ENCODE measurements at regions of chr3 and their contacts with region 1.

Region 1: DNA sequence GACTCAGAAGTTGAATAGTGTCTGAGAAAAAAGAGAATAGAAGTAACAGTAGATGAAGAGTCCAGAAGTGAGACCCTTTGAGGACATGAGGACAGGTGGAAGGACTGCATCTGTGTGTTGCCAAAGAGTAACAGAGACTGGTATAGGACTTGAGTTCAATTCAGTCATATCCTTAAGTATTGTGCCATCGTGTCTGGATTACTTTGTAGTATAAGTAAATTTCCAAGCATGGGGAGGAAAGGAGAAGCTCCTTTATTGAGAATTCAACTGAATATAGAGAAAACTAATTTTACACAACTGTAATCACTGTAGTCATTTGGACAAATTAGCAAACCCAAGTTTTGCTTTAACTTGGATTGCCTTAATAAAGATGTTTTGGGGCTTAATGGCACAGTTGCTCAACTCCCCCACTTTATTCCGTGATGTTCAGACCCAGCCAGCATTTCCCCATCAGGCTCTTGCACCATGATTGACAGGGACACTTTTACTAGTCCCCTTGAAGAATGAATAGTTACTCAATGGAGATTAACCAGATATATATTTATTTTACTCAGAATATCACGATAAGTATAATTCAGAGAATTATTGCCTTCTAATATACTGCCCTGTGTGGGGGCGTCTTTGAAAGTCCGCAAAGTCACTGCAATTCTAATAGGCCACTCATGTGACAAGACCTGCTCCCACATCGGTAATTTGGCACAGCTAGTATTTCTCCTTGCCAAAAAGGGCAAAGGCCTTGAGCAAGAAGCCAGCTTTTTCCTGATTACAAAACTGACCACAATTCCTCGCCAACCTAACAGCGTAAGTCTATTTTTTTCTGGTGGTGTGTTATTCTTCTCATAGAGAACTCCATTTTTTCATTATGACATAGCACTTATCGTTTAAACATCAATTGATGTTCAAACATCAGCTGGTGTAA is 61.3 kb downstream of the PPARG start:
- DNase-seq: peak in 1 of 2 experiments; percentile 60
- H3K4me3 ChIP-seq: no peak overlapping the region
- H3K27ac ChIP-seq: peak overlapping the region; percentile 3
- H3K4me1 ChIP-seq: peaks cover 59% of the 10 kb centered on the region
- H3K27me3 ChIP-seq: no peaks in the 10 kb centered on the region
- CTCF ChIP-seq: no peak

Region 2: GRCh38 chr3:12294885-12295580 is 55.1 kb before region 1 on chr3:
- CTCF ChIA-PET with region 1: no interaction called
- POLR2A ChIA-PET with region 1: no interaction called
- intact Hi-C with region 1: loop called (anchors 10 kb)
- DNase-seq: peak in 1 of 2 experiments; percentile 75
- H3K4me3 ChIP-seq: peak overlapping the region; percentile 85; the same call in 1 of the 2 replicates
- H3K27ac ChIP-seq: peak overlapping the region; percentile 91
- H3K4me1 ChIP-seq: peaks cover 75% of the 10 kb centered on the region
- H3K27me3 ChIP-seq: no peaks in the 10 kb centered on the region
- CTCF ChIP-seq: no peak